T-cell (primary cell): ENCODE measurements at regions of chr1 and their contacts with region 1.

Region 1: GRCh38 chr1:154240294-154240831 is 19.6 kb downstream of the UBAP2L start:
- DNase-seq: no peak
- ATAC-seq: no peak
- H3K4me3 ChIP-seq: no peak overlapping the region
- H3K4me3 Mint-ChIP-seq: no peak overlapping the region
- H3K27ac ChIP-seq: no peak overlapping the region
- H3K27ac Mint-ChIP-seq: peak overlapping the region; percentile 57 to 72
- H3K4me1 ChIP-seq: no peaks in the 10 kb centered on the region
- H3K4me1 Mint-ChIP-seq: peaks cover 35 to 43% (median 39%) of the 10 kb centered on the region in 3 donors
- H3K27me3 ChIP-seq: no peaks in the 10 kb centered on the region
- H3K27me3 Mint-ChIP-seq: no peaks in the 10 kb centered on the region

Region 2: DNA sequence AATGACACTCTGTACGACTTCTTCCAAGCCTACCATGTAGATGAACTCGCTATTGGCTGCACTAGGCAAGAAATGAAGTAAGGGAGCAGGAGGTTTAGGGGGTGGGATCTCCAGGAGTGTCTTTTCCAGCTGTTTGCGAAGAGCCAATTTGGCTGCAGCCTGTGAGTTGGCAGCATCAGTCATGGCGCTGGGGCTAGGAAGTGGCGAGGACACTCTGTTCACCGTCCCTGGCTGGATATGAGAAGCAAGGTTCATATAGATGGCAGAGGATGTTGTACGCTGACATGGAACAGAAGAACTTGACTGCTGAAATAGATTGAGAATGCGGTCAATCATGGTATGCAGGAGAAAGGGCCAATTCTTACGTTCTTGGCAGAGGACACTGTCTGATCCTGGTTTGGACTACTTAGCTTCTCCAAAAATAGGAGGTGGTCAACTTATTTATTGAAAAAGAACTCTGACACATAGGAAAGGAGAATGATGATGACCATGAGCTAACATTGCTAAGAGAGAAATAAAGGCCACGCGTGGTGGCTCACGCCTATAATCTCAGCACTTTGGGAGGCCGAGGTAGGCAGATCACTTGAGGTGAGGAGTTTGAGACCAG is 424.0 kb before region 1 on chr1:
- CTCF ChIA-PET with region 1: interaction called in 1 of 2 experiments, 13 read pairs
- POLR2A ChIA-PET with region 1: no interaction called
- DNase-seq: no peak
- ATAC-seq: no peak
- H3K4me3 ChIP-seq: no peak overlapping the region
- H3K4me3 Mint-ChIP-seq: no peak overlapping the region
- H3K27ac ChIP-seq: no peak overlapping the region
- H3K27ac Mint-ChIP-seq: peak overlapping the region in 1 of 2 donors; percentile 17
- H3K4me1 ChIP-seq: no peaks in the 10 kb centered on the region
- H3K4me1 Mint-ChIP-seq: no peaks in the 10 kb centered on the region
- H3K27me3 ChIP-seq: no peaks in the 10 kb centered on the region
- H3K27me3 Mint-ChIP-seq: no peaks in the 10 kb centered on the region

Region 3: DNA sequence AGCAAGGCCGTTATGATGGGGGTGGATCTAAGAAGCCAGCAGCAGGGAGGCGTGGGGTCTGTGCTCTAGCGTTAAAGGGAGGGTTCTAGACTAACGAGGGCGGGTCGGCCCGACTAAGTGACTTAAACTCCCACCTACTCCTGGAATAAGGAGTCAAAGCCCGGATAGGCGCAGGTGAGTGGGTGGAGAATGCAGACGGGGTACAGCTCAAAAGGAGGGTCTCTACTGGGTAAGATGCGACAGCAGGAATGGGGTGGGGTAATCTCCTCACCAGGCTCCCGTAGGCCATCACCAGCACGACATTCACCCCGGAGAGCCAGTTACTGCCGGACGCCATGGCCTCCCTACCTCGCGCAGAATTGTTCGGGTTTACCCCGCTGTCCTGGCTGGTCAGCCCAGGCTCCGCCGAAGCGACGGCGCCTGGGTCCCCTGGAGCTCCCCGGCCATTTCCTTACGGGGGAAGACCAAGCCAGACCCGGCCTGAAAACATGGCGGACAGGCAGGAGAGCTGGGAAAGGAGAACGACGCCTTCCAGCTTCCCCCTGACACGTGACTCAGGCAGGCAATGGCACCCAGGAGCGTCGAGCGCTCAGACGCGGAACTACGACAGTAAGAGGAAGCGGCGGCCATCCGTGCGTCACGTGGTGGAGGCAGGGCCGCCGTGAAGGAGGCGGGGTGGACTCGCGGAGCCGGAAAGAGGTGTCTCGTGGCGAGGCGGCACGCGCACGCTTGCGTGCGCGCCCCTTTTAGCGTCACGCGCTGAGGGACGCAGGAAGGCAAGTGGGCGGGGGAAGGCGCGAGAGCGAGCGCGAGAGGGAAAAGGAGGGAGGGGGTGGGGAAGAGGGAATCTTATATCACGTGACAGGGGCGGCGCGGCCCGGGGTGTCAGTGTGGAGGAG is 20.0 kb before region 1 on chr1 and contains the start of gene UBAP2L:
- CTCF ChIA-PET with region 1: no interaction called
- POLR2A ChIA-PET with region 1: no interaction called
- DNase-seq: peak; percentile 97 to 99 (median 99)
- ATAC-seq: peak; percentile 89 to 92 (median 90)
- H3K4me3 ChIP-seq: peak within 1 kb of the TSS; percentile 96 to 100
- H3K4me3 Mint-ChIP-seq: peak within 1 kb of the TSS; percentile 88 to 99 (median 96)
- H3K27ac ChIP-seq: peak within 1 kb of the TSS; percentile 96
- H3K27ac Mint-ChIP-seq: peak within 1 kb of the TSS; percentile 98 to 99
- H3K4me1 ChIP-seq: peaks cover 35 to 36% of the 10 kb centered on the region in 2 experiments
- H3K4me1 Mint-ChIP-seq: peaks cover 70 to 74% (median 71%) of the 10 kb centered on the region in 3 donors
- H3K27me3 ChIP-seq: no peaks in the 10 kb centered on the region
- H3K27me3 Mint-ChIP-seq: no peaks in the 10 kb centered on the region
- total RNA-seq, gene UBAP2L: 175 to 240 (median 192) TPM

Region 4: GRCh38 chr1:154263465-154264332 is 23.3 kb after region 1 on chr1:
- CTCF ChIA-PET with region 1: no interaction called
- POLR2A ChIA-PET with region 1: no interaction called
- DNase-seq: no peak
- ATAC-seq: no peak
- H3K4me3 ChIP-seq: no peak overlapping the region
- H3K4me3 Mint-ChIP-seq: no peak overlapping the region
- H3K27ac ChIP-seq: peak overlapping the region; percentile 79
- H3K27ac Mint-ChIP-seq: peak overlapping the region; percentile 86 to 92
- H3K4me1 ChIP-seq: peaks cover 21 to 26% of the 10 kb centered on the region in 2 experiments
- H3K4me1 Mint-ChIP-seq: peaks cover 37 to 56% (median 43%) of the 10 kb centered on the region in 3 donors
- H3K27me3 ChIP-seq: no peaks in the 10 kb centered on the region
- H3K27me3 Mint-ChIP-seq: no peaks in the 10 kb centered on the region